GM12878 (cell line): ENCODE measurements at regions of chr2 and their contacts with region 1.

Region 1: GRCh38 chr2:189115126-189115525 is 64.4 kb downstream of the COL5A2 start:
- DNase-seq: no peak
- ATAC-seq: peak; percentile 20; the same call in 2 of the 3 replicates
- H3K4me3 ChIP-seq: no peak overlapping the region
- H3K27ac ChIP-seq: no peak overlapping the region
- H3K4me1 ChIP-seq: no peaks in the 10 kb centered on the region
- H3K27me3 ChIP-seq: no peaks in the 10 kb centered on the region
- CTCF ChIP-seq: no peak; a peak in 1 of 6 replicates
- EP300 ChIP-seq: no peak
- POLR2A ChIP-seq: no peak
- RAD21 ChIP-seq: no peak

Region 2: GRCh38 chr2:189096769-189097447 is 18.2 kb before region 1 on chr2:
- CTCF ChIA-PET with region 1: interaction called, 20 read pairs
- POLR2A ChIA-PET with region 1: no interaction called
- RAD21 ChIA-PET with region 1: interaction called, 9 read pairs
- SMC1A ChIA-PET with region 1: interaction called, 38 read pairs
- in situ Hi-C with region 1: no loop called
- intact Hi-C with region 1: no loop called
- DNase-seq: no peak
- ATAC-seq: no peak
- H3K4me3 ChIP-seq: no peak overlapping the region
- H3K27ac ChIP-seq: no peak overlapping the region
- H3K4me1 ChIP-seq: no peaks in the 10 kb centered on the region
- H3K27me3 ChIP-seq: no peaks in the 10 kb centered on the region
- CTCF ChIP-seq: no peak
- EP300 ChIP-seq: no peak
- POLR2A ChIP-seq: no peak
- RAD21 ChIP-seq: no peak

Region 3: GRCh38 chr2:189129971-189130370 is 14.8 kb after region 1 on chr2:
- CTCF ChIA-PET with region 1: interaction called, 6 read pairs
- POLR2A ChIA-PET with region 1: no interaction called
- RAD21 ChIA-PET with region 1: interaction called, 3 read pairs
- SMC1A ChIA-PET with region 1: interaction called, 15 read pairs
- in situ Hi-C with region 1: no loop called
- intact Hi-C with region 1: no loop called
- DNase-seq: no peak
- ATAC-seq: no peak
- H3K4me3 ChIP-seq: no peak overlapping the region
- H3K27ac ChIP-seq: no peak overlapping the region
- H3K4me1 ChIP-seq: no peaks in the 10 kb centered on the region
- H3K27me3 ChIP-seq: no peaks in the 10 kb centered on the region
- CTCF ChIP-seq: no peak
- EP300 ChIP-seq: no peak
- POLR2A ChIP-seq: no peak
- RAD21 ChIP-seq: no peak

Region 4: GRCh38 chr2:189287982-189288521 is 172.9 kb after region 1 on chr2:
- CTCF ChIA-PET with region 1: interaction called, 31 read pairs
- POLR2A ChIA-PET with region 1: no interaction called
- RAD21 ChIA-PET with region 1: interaction called, 8 read pairs
- SMC1A ChIA-PET with region 1: interaction called, 9 read pairs
- in situ Hi-C with region 1: no loop called
- intact Hi-C with region 1: no loop called
- DNase-seq: no peak
- ATAC-seq: peak; percentile 89
- H3K4me3 ChIP-seq: no peak overlapping the region
- H3K27ac ChIP-seq: no peak overlapping the region
- H3K4me1 ChIP-seq: no peaks in the 10 kb centered on the region
- H3K27me3 ChIP-seq: no peaks in the 10 kb centered on the region
- CTCF ChIP-seq: peak; percentile 30 to 54 (median 33); a peak in 4 of 6 replicates
- EP300 ChIP-seq: no peak
- POLR2A ChIP-seq: no peak
- RAD21 ChIP-seq: peak; percentile 64